Heart left ventricle (tissue), 16 donors: ENCODE measurements at regions of chr3 and their contacts with region 1.

Region 1: DNA sequence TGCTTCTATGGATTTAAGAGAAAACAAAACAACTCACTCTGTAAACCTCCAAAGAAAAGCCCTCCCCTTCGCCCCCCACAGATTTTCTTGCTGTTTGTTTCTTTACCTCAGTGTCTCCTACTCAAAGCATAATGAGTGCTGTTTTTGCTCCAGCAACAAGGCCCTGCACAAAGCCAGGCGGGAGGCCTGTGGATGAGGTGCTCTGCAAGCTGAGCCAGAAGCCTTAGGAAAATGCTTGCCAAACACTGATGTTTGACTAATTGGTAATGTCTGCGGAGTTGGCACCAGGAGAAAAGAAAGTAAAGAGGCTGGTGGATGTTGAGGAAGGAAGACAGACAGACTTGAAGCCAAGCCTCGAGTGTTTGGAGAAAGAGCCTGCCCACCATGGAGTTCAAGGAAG is 99.7 kb downstream of the RARB start:
- DNase-seq: no peak
- ATAC-seq: peak in 3 of 4 donors; percentile 57 to 77 (median 60)
- H3K4me3 ChIP-seq: no peak overlapping the region
- H3K27ac ChIP-seq: peak overlapping the region in 2 of 12 donors; percentile 11 to 13
- H3K4me1 ChIP-seq: peaks cover 0 to 58% (median 15%) of the 10 kb centered on the region in 12 donors
- H3K27me3 ChIP-seq: no peaks in the 10 kb centered on the region
- CTCF ChIP-seq: no peak
- POLR2A ChIP-seq: no peak

Region 2: DNA sequence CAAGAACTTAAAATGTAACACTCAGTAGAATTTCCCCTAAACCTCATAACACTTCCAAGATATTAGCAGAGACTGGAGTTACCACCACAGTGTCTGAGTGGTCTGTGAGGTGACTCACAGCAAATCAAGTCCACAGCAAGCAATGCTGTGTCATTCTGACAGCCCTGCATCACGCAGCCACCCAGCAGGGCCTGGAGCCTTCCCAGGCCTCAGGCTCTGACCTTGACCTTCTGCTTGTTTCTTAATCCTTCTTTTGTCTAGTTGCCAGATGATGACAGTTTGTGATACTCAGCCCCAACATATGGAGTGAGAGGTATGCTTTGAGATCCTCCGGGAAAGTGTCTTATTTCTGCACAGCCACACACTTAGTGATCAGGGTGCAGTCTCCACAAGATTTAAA is 54.4 kb after region 1 on chr3:
- intact Hi-C with region 1: loop called in 2 of 10 experiments (anchors 5 to 10 kb)
- DNase-seq: no peak
- ATAC-seq: peak in 1 of 4 donors; percentile 18
- H3K4me3 ChIP-seq: no peak overlapping the region
- H3K27ac ChIP-seq: no peak overlapping the region
- H3K4me1 ChIP-seq: peaks cover 0 to 24% (median 0%) of the 10 kb centered on the region in 12 donors
- H3K27me3 ChIP-seq: no peaks in the 10 kb centered on the region
- CTCF ChIP-seq: no peak
- POLR2A ChIP-seq: no peak